Activated T-helper 2 cell treated with anti-CD3 and anti-CD28 coated beads, Interferon-gamma antibody, Interleukin-2, Interleukin-4, amounts not matched to agents 10 μg/mL and 5 μg/mL and 100 μg/mL, durations not matched to agents 14 hours and 24 hours and 36 hours (primary cell): ENCODE measurements at regions of chr2 and their contacts with region 1.

Region 1: DNA sequence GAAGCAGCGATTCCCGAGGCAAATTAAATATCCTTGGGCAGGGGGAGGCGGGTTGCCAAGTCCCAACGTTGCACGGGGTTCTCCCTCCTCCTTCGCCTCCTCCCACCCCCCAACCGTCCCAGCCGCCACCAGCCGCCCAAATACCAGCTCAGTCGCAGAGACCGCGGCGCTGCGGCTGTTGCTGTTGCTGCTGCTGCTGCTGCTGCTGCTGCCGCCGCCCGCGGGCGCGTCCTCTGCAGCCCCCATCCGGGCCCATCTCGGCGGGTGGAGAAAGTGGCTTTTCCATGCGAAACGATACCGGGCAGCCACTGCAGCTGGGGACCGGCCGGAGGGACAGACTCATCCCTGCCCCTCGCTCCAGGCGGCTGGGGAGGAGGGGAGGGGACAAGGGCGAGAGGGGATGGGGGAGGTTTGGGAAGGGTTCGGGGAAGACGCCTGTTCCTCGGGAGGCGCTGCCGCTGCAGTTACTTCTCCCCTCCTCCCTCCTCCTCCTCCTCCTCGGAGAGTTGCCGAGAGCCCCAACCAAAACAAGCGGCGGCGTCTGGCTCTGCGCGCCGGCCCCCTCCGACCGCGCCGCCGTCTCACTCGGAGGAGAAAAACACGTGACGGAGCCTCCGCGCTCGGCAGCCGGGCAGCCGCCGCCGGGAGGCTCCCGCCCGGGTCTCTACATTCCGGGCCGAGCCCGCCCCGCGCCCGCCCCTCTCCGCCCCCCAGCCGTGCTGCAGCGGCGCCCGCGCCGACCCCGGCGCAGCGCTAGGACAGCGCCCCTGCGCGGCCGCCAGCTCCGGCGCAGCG is at the start of gene IRS1:
- DNase-seq: peak; percentile 47
- H3K4me3 Mint-ChIP-seq: peak within 1 kb of the TSS; percentile 81
- H3K27ac Mint-ChIP-seq: no peak within 1 kb of the TSS
- H3K4me1 Mint-ChIP-seq: peaks cover 15% of the 10 kb centered on the region
- H3K27me3 Mint-ChIP-seq: peaks cover 9% of the 10 kb centered on the region
- total RNA-seq, gene IRS1: 1.9 and 3.1 TPM in 2 replicates

Region 2: GRCh38 chr2:225889446-225889850 is 909.9 kb before region 1 on chr2:
- intact Hi-C with region 1: loop called (anchors 2 kb)
- DNase-seq: no peak
- H3K4me3 Mint-ChIP-seq: no peak overlapping the region
- H3K27ac Mint-ChIP-seq: no peak overlapping the region
- H3K4me1 Mint-ChIP-seq: no peaks in the 10 kb centered on the region
- H3K27me3 Mint-ChIP-seq: no peaks in the 10 kb centered on the region

Region 3: DNA sequence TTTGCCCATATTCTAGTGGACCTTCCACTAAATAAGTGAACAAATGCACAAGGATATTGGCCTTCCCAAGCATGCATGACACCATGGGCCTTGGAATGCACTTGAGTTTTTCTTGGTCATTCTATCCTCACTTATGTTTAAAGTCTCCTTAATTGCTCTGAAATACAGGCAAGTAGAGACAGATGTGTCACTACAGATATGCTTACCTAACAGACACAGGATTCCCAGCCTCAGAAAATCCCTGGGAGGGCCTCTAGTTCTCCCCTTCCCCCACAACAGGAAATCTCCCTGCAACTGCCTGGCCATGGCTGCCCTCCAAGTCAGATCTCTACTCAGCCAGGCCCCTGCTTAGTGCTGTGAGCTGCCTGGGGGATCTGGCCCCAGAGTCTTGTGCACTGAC is 444.9 kb before region 1 on chr2:
- intact Hi-C with region 1: loop called (anchors 10 kb)
- DNase-seq: no peak
- H3K4me3 Mint-ChIP-seq: no peak overlapping the region
- H3K27ac Mint-ChIP-seq: no peak overlapping the region
- H3K4me1 Mint-ChIP-seq: no peaks in the 10 kb centered on the region
- H3K27me3 Mint-ChIP-seq: peaks cover 5% of the 10 kb centered on the region

Region 4: GRCh38 chr2:226835796-226836547 is 36.6 kb after region 1 on chr2 and contains the start of gene RHBDD1:
- intact Hi-C with region 1: loop called (anchors 1 kb)
- DNase-seq: peak; percentile 92
- H3K4me3 Mint-ChIP-seq: peak within 1 kb of the TSS; percentile 92
- H3K27ac Mint-ChIP-seq: peak within 1 kb of the TSS; percentile 98
- H3K4me1 Mint-ChIP-seq: peaks cover 50% of the 10 kb centered on the region
- H3K27me3 Mint-ChIP-seq: no peaks in the 10 kb centered on the region
- total RNA-seq, gene RHBDD1: 40.9 and 42.2 TPM in 2 replicates

Region 5: GRCh38 chr2:227106845-227107759 is 307.7 kb after region 1 on chr2:
- intact Hi-C with region 1: loop called (anchors 2 kb)
- DNase-seq: no peak
- H3K4me3 Mint-ChIP-seq: no peak overlapping the region
- H3K27ac Mint-ChIP-seq: no peak overlapping the region
- H3K4me1 Mint-ChIP-seq: no peaks in the 10 kb centered on the region
- H3K27me3 Mint-ChIP-seq: no peaks in the 10 kb centered on the region

Region 6: GRCh38 chr2:227627769-227628168 is 828.4 kb after region 1 on chr2:
- intact Hi-C with region 1: no loop called
- DNase-seq: no peak
- H3K4me3 Mint-ChIP-seq: no peak overlapping the region
- H3K27ac Mint-ChIP-seq: no peak overlapping the region
- H3K4me1 Mint-ChIP-seq: no peaks in the 10 kb centered on the region
- H3K27me3 Mint-ChIP-seq: peaks cover 15% of the 10 kb centered on the region